ACHN (cell line): ENCODE measurements at regions of chr10 and their contacts with region 1.

Region 1: GRCh38 chr10:69425511-69426298 is 9.0 kb upstream of the TACR2 start:
- DNase-seq: no peak

Region 2: GRCh38 chr10:69494626-69495558 is 69.2 kb after region 1 on chr10:
- in situ Hi-C with region 1: loop called (anchors 10 kb)
- DNase-seq: no peak

Region 3: DNA sequence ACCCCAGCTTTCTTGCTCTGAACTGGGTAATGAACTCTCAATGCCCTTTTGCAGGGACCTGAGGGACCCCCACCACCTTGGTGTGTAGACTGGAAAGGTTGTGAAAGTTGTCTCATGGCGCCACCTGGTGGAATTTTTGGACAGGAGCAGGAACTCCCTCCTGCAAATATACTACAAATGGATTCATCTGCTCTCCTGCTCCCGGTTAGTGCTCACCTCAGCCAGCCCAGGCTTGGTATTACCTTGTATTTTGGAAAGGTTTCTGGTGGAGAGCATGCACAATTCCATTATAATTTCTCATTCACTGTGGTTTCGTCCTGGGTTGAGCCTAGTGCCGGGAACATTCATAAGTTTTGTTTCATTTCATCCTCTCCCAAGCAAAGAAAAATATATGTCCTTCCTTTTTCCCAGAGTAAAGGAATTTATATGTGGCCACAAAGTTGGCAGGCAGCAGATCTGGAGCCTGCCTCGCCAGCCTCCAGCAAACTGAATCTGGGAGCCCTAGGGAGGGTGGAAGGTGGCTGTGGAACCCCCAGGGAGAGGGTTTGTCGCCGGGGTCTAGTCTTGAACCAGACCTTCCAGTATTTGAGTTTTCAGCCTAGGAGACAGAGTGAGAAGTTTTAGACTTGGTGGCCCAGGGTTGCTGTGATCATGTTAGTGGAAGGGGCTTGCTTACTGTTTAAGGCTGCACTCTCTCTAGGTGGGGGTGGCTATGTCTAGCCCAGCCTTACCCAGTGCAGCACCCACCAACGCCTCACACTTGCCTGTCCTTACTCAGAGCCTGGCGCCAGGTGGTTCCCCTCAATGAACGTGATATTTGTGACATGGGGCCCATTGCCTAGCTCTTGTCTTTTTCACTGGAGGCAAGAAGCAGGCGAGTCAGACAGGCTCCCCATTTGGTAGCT is 213.8 kb after region 1 on chr10:
- in situ Hi-C with region 1: loop called (anchors 10 kb)
- DNase-seq: peak; percentile 64